Sigmoid colon (tissue), 7 donors: ENCODE measurements at regions of chr5 and their contacts with region 1.

Region 1: GRCh38 chr5:150436141-150436680 is 13.3 kb downstream of the RPS14 start:
- DNase-seq: peak; percentile 94
- H3K4me3 ChIP-seq: no peak overlapping the region
- H3K27ac ChIP-seq: no peak overlapping the region
- H3K4me1 ChIP-seq: peaks cover 0 to 7% (median 0%) of the 10 kb centered on the region in 4 donors
- H3K27me3 ChIP-seq: no peaks in the 10 kb centered on the region
- CTCF ChIP-seq: peak; percentile 70 to 86 (median 79)
- EP300 ChIP-seq: no peak
- POLR2A ChIP-seq: no peak

Region 2: GRCh38 chr5:150155258-150156026 is 280.8 kb before region 1 on chr5 and contains the start of gene PDGFRB:
- intact Hi-C with region 1: loop called (anchors 5 kb)
- DNase-seq: peak; percentile 98
- H3K4me3 ChIP-seq: peak within 1 kb of the TSS; percentile 54 to 61 (median 57)
- H3K27ac ChIP-seq: peak within 1 kb of the TSS; percentile 84 to 92 (median 87)
- H3K4me1 ChIP-seq: peaks cover 0 to 54% (median 31%) of the 10 kb centered on the region in 4 donors
- H3K27me3 ChIP-seq: no peaks in the 10 kb centered on the region
- CTCF ChIP-seq: no peak
- EP300 ChIP-seq: no peak
- POLR2A ChIP-seq: peak; percentile 73 to 78
- total RNA-seq, gene PDGFRB: 54.9 to 104 (median 69.4) TPM

Region 3: DNA sequence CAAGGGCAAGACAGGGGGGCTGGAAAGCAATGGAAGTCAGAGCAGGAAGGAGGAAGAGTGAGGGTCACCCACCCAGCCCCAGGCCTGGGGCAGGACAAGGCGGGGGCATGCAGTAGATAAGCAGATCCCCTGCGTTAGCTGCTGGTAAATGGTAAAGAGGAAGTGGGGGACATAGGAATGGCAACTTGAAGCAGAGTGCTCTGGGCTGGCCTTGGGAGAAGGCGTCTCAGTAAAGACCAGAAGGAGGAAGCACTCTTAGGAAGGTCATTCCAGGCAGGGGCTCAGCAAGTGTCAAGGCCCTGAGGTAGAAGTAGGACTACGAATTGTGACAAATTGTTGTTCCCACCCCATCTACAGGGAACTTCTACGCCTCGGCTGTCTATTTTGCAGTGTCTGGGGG is 63.6 kb before region 1 on chr5:
- intact Hi-C with region 1: no loop called
- DNase-seq: no peak
- H3K4me3 ChIP-seq: no peak overlapping the region
- H3K27ac ChIP-seq: no peak overlapping the region
- H3K4me1 ChIP-seq: peaks cover 0 to 10% (median 5%) of the 10 kb centered on the region in 4 donors
- H3K27me3 ChIP-seq: no peaks in the 10 kb centered on the region
- CTCF ChIP-seq: no peak
- EP300 ChIP-seq: no peak
- POLR2A ChIP-seq: no peak

Region 4: GRCh38 chr5:150538007-150538917 is 102.1 kb after region 1 on chr5:
- intact Hi-C with region 1: no loop called
- DNase-seq: no peak
- H3K4me3 ChIP-seq: no peak overlapping the region
- H3K27ac ChIP-seq: peak overlapping the region in 2 of 4 donors; percentile 83 to 88
- H3K4me1 ChIP-seq: peaks cover 0 to 30% (median 23%) of the 10 kb centered on the region in 4 donors
- H3K27me3 ChIP-seq: no peaks in the 10 kb centered on the region
- CTCF ChIP-seq: no peak
- EP300 ChIP-seq: no peak
- POLR2A ChIP-seq: no peak